Activated CD4-positive, alpha-beta T cell treated with anti-CD3 and anti-CD28 coated beads, Interleukin-2, amount 10 ng/mL, durations not matched to agents 24 days and 14 days (primary cell): ENCODE measurements at regions of chrX and their contacts with region 1.

Region 1: DNA sequence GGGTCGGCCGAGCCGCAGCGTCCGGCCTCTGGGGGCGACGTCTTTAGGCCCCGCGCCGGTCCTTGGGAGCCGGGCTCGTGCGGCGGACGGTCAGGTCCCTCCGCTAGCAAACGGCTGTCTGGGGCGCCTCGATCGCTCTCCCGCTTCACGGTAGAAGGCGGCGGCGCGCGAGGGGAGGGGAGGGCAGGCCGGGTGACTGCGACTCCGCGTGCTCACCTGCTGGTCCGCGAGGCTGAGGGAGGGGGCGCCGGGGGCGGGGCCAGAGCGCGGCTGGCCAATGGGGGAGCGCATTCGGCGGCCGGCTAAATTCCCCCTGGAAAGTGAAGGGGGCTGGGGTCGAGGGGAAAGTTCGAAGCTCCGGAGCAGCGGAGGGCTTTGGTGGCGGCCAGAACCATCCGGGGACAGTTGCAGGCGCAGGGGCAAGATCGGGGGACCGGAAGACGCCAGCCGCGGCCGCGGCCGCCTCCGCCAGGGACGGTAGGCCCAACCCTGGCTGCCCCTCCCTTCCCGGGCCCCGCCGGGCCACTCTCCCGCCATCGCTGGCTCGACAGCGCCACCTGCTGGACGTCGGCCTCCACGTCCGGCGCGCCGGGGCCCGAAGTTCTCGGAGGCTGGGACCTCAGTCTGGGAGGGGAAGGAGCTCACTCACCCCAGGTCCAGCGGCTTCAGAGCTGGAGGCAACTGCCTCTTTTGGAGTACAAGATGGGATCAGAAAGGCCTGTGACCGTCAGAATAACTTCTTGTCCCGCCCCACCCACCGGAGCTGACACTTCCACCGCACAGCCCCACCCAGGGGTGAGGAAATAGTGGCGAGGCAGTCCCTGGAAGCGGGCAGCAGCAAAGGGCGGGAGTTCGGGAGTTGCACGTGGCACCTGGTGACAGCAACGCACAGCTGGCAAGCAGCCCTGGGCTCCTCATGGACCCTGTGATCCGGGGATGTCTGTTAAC is 49.9 kb downstream of the ELF4 start:
- DNase-seq: peak; percentile 96
- H3K4me3 Mint-ChIP-seq: peak overlapping the region; percentile 79
- H3K27ac Mint-ChIP-seq: peak overlapping the region; percentile 84
- H3K4me1 Mint-ChIP-seq: peaks cover 4% of the 10 kb centered on the region
- H3K27me3 Mint-ChIP-seq: no peaks in the 10 kb centered on the region

Region 2: DNA sequence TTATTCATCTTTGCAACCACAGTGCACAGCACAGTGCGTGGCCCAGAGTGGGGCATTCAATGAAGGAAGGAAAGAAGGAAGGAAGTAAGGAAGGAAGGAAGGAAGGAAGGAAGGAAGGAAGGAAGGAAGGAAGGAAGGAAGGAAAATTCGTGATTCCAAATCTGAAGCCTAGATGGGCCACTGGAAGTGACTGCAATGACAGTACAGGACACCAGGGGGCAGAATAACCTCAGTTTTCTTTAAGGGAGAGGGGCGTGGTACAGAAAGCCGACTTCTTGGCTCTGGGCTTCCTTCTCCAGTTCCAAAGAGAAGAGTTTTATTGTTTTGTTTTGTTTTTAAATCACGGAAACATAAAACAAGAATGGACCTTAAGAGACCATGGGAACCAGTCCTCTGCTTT is 453.5 kb before region 1 on chrX:
- intact Hi-C with region 1: loop called (anchors 1 kb)
- DNase-seq: peak; percentile 85
- H3K4me3 Mint-ChIP-seq: no peak overlapping the region
- H3K27ac Mint-ChIP-seq: no peak overlapping the region
- H3K4me1 Mint-ChIP-seq: peaks cover 17% of the 10 kb centered on the region
- H3K27me3 Mint-ChIP-seq: no peaks in the 10 kb centered on the region

Region 3: GRCh38 chrX:129925305-129926092 is 134.9 kb before region 1 on chrX:
- intact Hi-C with region 1: loop called (anchors 2 kb)
- DNase-seq: peak; percentile 90
- H3K4me3 Mint-ChIP-seq: no peak overlapping the region
- H3K27ac Mint-ChIP-seq: no peak overlapping the region
- H3K4me1 Mint-ChIP-seq: peaks cover 5% of the 10 kb centered on the region
- H3K27me3 Mint-ChIP-seq: no peaks in the 10 kb centered on the region

Region 4: GRCh38 chrX:129931411-129932015 is 128.9 kb before region 1 on chrX:
- intact Hi-C with region 1: loop called (anchors 1 kb)
- DNase-seq: peak; percentile 90
- H3K4me3 Mint-ChIP-seq: peak overlapping the region; percentile 79
- H3K27ac Mint-ChIP-seq: peak overlapping the region; percentile 71
- H3K4me1 Mint-ChIP-seq: peaks cover 4% of the 10 kb centered on the region
- H3K27me3 Mint-ChIP-seq: peaks cover 15% of the 10 kb centered on the region

Region 5: GRCh38 chrX:129996120-129996519 is 64.3 kb before region 1 on chrX:
- intact Hi-C with region 1: no loop called
- DNase-seq: no peak
- H3K4me3 Mint-ChIP-seq: no peak overlapping the region
- H3K27ac Mint-ChIP-seq: no peak overlapping the region
- H3K4me1 Mint-ChIP-seq: peaks cover 2% of the 10 kb centered on the region
- H3K27me3 Mint-ChIP-seq: no peaks in the 10 kb centered on the region